HEK293 (cell line): ENCODE measurements at regions of chr3 and their contacts with region 1.

Region 1: GRCh38 chr3:107271787-107272387 is 105.4 kb upstream of the CCDC54 start:
- H3K4me3 ChIP-seq: no peak overlapping the region
- H3K27ac ChIP-seq: no peak overlapping the region
- H3K4me1 ChIP-seq: no peaks in the 10 kb centered on the region
- CTCF ChIP-seq: no peak; the same call in 1 of the 2 replicates

Region 2: GRCh38 chr3:107235928-107236315 is 36.0 kb before region 1 on chr3:
- CTCF ChIA-PET with region 1: interaction called, 17 read pairs
- POLR2A ChIA-PET with region 1: no interaction called
- H3K4me3 ChIP-seq: no peak overlapping the region; the same call in 1 of the 2 replicates
- H3K27ac ChIP-seq: no peak overlapping the region
- H3K4me1 ChIP-seq: no peaks in the 10 kb centered on the region; the same call in 1 of the 2 replicates
- CTCF ChIP-seq: peak; percentile 55

Region 3: DNA sequence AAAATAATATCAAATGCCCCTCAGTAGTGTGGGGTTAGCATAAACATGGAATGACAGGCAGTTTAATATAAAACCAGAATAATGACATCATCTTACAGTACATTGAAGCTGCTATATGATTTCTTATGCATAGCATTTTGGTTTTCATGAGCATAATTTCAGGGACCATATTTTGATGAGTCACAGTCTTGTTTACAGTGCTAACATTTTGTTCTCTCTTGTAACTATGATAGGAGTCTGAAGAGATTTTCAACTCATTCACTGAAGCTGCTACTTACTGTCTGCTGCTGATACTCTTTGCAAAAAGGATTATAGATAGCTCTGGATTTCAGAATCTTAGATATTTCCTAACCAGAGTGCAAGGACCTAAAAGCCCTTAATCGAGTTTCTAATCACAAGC is 12.7 kb after region 1 on chr3:
- CTCF ChIA-PET with region 1: interaction called, 24 read pairs
- POLR2A ChIA-PET with region 1: no interaction called
- H3K4me3 ChIP-seq: no peak overlapping the region
- H3K27ac ChIP-seq: no peak overlapping the region
- H3K4me1 ChIP-seq: no peaks in the 10 kb centered on the region
- CTCF ChIP-seq: no peak

Region 4: GRCh38 chr3:107421170-107421792 is 149.4 kb after region 1 on chr3:
- CTCF ChIA-PET with region 1: interaction called, 44 read pairs
- POLR2A ChIA-PET with region 1: no interaction called
- H3K4me3 ChIP-seq: no peak overlapping the region; the same call in none of the 2 replicates
- H3K27ac ChIP-seq: no peak overlapping the region
- H3K4me1 ChIP-seq: no peaks in the 10 kb centered on the region
- CTCF ChIP-seq: no peak

Region 5: GRCh38 chr3:107429320-107430181 is 157.7 kb after region 1 on chr3:
- CTCF ChIA-PET with region 1: interaction called, 16 read pairs
- POLR2A ChIA-PET with region 1: interaction called, 4 read pairs
- H3K4me3 ChIP-seq: peak overlapping the region; percentile 44
- H3K27ac ChIP-seq: peak overlapping the region; percentile 60; the same call in 1 of the 2 replicates
- H3K4me1 ChIP-seq: peaks cover 5% of the 10 kb centered on the region; the same call in 1 of the 2 replicates
- CTCF ChIP-seq: peak; percentile 61